ENCODE measurements at regions of chr14 and their contacts with region 1.

Region 1: GRCh38 chr14:90301668-90302090 is 30.1 kb downstream of the NRDE2 start:
- DNase-seq: peak; percentile 33 to 69 (median 64)
- H3K4me3 ChIP-seq: no peak overlapping the region
- H3K27ac ChIP-seq: no peak overlapping the region
- H3K4me1 ChIP-seq: peaks cover 7 to 22% (median 12%) of the 10 kb centered on the region in 4 experiments
- H3K27me3 ChIP-seq: no peaks in the 10 kb centered on the region

Region 2: GRCh38 chr14:90288651-90289355 is 12.9 kb before region 1 on chr14:
- CTCF ChIA-PET with region 1: interaction called, 13 read pairs
- POLR2A ChIA-PET with region 1: no interaction called
- DNase-seq: no peak
- H3K4me3 ChIP-seq: no peak overlapping the region
- H3K27ac ChIP-seq: no peak overlapping the region
- H3K4me1 ChIP-seq: no peaks in the 10 kb centered on the region
- H3K27me3 ChIP-seq: no peaks in the 10 kb centered on the region

Region 3: GRCh38 chr14:90697577-90698206 is 396.0 kb after region 1 on chr14:
- CTCF ChIA-PET with region 1: interaction called, 15 read pairs
- POLR2A ChIA-PET with region 1: no interaction called
- DNase-seq: peak; percentile 65 to 78 (median 77)
- H3K4me3 ChIP-seq: peak overlapping the region in 1 of 7 experiments; percentile 40
- H3K27ac ChIP-seq: no peak overlapping the region
- H3K4me1 ChIP-seq: peaks cover 0 to 25% (median 17%) of the 10 kb centered on the region in 4 experiments
- H3K27me3 ChIP-seq: no peaks in the 10 kb centered on the region